Activated CD8-positive, alpha-beta T cell treated with anti-CD3 and anti-CD28 coated beads for 36 hours (primary cell): ENCODE measurements at regions of chr3 and their contacts with region 1.

Region 1: GRCh38 chr3:15361494-15362212 is 29.3 kb upstream of the SH3BP5 start:
- DNase-seq: peak; percentile 81
- ATAC-seq: peak; percentile 85
- H3K4me3 Mint-ChIP-seq: no peak overlapping the region
- H3K27ac Mint-ChIP-seq: no peak overlapping the region
- H3K4me1 Mint-ChIP-seq: peaks cover 32% of the 10 kb centered on the region
- H3K27me3 Mint-ChIP-seq: peaks cover 6% of the 10 kb centered on the region
- CTCF ChIP-seq: no peak

Region 2: DNA sequence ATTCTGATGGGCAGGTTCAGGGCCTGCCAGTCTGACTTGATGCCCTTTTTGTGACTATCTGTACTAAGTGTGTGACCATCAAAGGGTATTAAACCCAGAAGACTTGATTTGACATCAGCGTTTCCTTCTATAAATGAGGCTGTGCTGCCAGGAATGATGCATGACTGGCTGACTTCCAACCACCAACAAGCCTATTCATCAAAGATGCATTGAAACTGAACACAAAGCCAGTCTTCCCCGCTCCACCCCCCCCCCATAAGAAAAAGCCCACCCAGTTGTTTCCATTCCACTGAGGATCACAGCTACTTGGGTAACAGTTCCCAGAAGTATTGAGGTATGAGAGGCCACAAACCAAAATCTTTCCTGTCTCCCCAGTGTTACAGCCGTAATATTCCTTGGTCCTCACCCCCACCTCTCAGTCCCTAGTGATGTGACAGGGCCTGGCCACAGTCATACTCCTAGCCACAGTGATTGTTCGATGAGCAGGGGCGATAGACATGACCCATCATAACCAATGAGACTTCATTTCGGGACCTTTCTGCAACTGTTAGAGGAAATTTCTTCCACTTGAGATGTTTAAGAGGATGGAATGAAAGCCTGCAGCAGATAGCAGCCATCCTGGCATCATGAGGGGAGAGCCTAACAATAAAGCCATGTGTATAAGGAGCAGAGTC is 51.9 kb before region 1 on chr3:
- CTCF ChIA-PET with region 1: interaction called, 3 read pairs
- POLR2A ChIA-PET with region 1: interaction called, 5 read pairs
- intact Hi-C with region 1: loop called (anchors 2 kb)
- DNase-seq: peak; percentile 41
- ATAC-seq: peak; percentile 25
- H3K4me3 Mint-ChIP-seq: no peak overlapping the region
- H3K27ac Mint-ChIP-seq: peak overlapping the region; percentile 75
- H3K4me1 Mint-ChIP-seq: peaks cover 46% of the 10 kb centered on the region
- H3K27me3 Mint-ChIP-seq: no peaks in the 10 kb centered on the region
- CTCF ChIP-seq: no peak